ENCODE measurements at regions of chr1 and their contacts with region 1.

Region 1: GRCh38 chr1:201170533-201171062 is 16.3 kb upstream of the TMEM9 start:
- DNase-seq: peak; percentile 100
- ATAC-seq: peak; percentile 99
- H3K4me3 ChIP-seq: peak overlapping the region; percentile 70
- H3K27ac ChIP-seq: peak overlapping the region; percentile 27
- H3K4me1 ChIP-seq: peaks cover 18% of the 10 kb centered on the region
- H3K27me3 ChIP-seq: peaks cover 6% of the 10 kb centered on the region; the same call in 1 of the 2 replicates
- CTCF ChIP-seq: no peak

Region 2: DNA sequence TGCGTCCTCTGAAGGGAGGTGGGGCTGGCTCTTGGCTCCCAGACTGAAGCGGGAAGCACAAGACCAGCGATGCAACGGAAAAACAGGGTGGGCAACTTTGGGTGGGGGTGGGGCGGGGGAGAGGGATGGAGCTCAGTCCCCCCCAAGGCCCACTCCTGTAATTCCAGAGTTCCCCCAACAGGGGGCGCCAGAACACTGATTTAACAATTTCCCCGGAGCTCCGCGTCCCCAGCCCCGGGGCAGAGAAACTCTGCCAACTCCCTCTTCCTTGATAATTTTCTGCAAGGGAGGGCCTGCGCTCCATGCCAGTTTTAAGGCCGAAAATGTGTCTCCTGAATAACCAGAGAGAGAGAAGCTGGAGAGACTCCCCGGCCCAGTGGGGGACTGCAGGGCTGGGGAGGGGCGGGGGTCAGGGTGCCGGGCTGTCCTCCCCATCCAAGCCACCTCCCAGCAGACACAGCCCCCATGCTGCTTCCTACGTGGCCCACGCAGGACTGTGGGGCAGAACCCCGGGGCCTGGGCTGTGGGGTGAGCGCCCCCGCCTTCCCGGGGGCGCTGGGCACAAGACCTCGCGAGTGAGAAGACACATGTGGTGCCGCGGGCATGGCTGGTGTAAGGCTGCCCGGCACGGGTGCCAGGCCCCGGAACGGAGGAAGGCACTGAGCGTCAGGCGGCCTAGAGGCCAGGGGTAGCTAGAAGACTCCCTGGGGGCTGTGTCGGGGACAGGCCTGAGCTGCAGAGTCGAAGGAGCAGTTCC is 198.5 kb before region 1 on chr1:
- CTCF ChIA-PET with region 1: no interaction called
- POLR2A ChIA-PET with region 1: no interaction called
- intact Hi-C with region 1: no loop called
- DNase-seq: peak; percentile 93
- ATAC-seq: peak; percentile 10; the same call in 1 of the 2 replicates
- H3K4me3 ChIP-seq: peak overlapping the region; percentile 26; the same call in 1 of the 2 replicates
- H3K27ac ChIP-seq: no peak overlapping the region
- H3K4me1 ChIP-seq: peaks cover 15% of the 10 kb centered on the region
- H3K27me3 ChIP-seq: no peaks in the 10 kb centered on the region
- CTCF ChIP-seq: peak; percentile 98

Region 3: DNA sequence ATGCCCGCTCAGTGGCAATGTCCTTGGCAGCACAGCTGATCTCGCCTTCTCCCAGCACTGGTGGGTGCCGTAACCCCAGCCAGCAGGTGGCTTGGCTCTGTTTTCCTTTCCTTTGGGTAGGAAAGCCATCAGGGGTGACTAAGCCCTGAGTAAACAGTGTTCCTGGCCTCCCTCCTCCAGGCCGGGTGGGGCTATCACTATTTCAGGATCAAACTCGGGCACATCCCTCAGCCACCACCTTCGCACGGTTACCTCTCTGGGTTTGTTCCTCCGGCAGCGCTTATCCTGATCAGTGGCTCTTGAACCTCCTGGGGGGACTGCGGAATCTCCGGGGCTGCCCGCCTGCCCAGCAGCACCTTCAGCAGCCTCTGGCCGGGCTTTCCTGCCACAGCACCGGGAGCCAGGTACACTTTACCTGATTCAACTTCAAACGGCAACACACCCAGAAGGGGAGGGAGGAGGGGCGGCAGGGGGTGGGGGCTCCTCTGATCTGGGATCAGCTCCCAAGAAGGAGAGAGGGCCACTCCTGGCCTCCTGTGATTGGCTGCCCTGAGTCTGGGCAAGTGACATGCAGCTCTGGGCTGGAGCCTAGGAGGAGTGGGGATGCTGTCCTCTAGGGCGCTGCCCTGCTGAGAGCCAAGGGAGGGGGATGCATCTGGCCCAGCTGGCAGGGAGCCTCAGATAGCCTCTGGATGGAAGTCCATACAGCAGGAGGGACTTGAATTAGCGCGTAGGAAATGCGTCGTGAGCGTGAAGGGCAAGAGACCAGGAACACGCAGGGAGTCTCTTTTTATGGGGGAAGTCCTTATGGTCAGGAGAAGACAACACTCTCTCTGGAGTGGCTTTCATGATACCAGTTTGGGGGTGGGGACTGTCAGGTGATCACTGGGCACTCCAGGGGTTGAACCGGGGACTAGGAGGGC is 43.5 kb before region 1 on chr1 and contains the start of gene ASCL5:
- CTCF ChIA-PET with region 1: no interaction called
- POLR2A ChIA-PET with region 1: interaction called, 5 read pairs
- intact Hi-C with region 1: loop called (anchors 1 kb)
- DNase-seq: peak; percentile 100
- ATAC-seq: peak; percentile 90
- H3K4me3 ChIP-seq: peak within 1 kb of the TSS; percentile 59
- H3K27ac ChIP-seq: peak within 1 kb of the TSS; percentile 35
- H3K4me1 ChIP-seq: peaks cover 38% of the 10 kb centered on the region
- H3K27me3 ChIP-seq: no peaks in the 10 kb centered on the region
- CTCF ChIP-seq: peak; percentile 89
- total RNA-seq, gene ASCL5: 2.4 and 3.1 TPM in 2 replicates

Region 4: GRCh38 chr1:201149400-201149799 is 21.2 kb before region 1 on chr1:
- CTCF ChIA-PET with region 1: interaction called, 5 read pairs
- POLR2A ChIA-PET with region 1: interaction called, 5 read pairs
- intact Hi-C with region 1: loop called (anchors 1 kb)
- DNase-seq: peak; percentile 94
- ATAC-seq: peak; percentile 48
- H3K4me3 ChIP-seq: no peak overlapping the region
- H3K27ac ChIP-seq: no peak overlapping the region
- H3K4me1 ChIP-seq: peaks cover 15% of the 10 kb centered on the region
- H3K27me3 ChIP-seq: no peaks in the 10 kb centered on the region
- CTCF ChIP-seq: peak; percentile 99

Region 5: GRCh38 chr1:201154389-201155165 is 16.0 kb before region 1 on chr1 and contains the start of gene TMEM9:
- CTCF ChIA-PET with region 1: interaction called, 5 read pairs
- POLR2A ChIA-PET with region 1: interaction called, 5 read pairs
- intact Hi-C with region 1: loop called (anchors 1 kb)
- DNase-seq: peak; percentile 100
- ATAC-seq: peak; percentile 95
- H3K4me3 ChIP-seq: peak within 1 kb of the TSS; percentile 72
- H3K27ac ChIP-seq: peak within 1 kb of the TSS; percentile 1
- H3K4me1 ChIP-seq: peaks cover 20% of the 10 kb centered on the region
- H3K27me3 ChIP-seq: no peaks in the 10 kb centered on the region
- CTCF ChIP-seq: no peak
- total RNA-seq, gene TMEM9: 428 and 435 TPM in 2 replicates

Region 6: GRCh38 chr1:201184307-201185122 is 13.9 kb after region 1 on chr1:
- CTCF ChIA-PET with region 1: interaction called, 10 read pairs
- POLR2A ChIA-PET with region 1: no interaction called
- intact Hi-C with region 1: no loop called
- DNase-seq: peak; percentile 89
- ATAC-seq: peak; percentile 87
- H3K4me3 ChIP-seq: no peak overlapping the region
- H3K27ac ChIP-seq: no peak overlapping the region
- H3K4me1 ChIP-seq: peaks cover 11% of the 10 kb centered on the region; the same call in 1 of the 2 replicates
- H3K27me3 ChIP-seq: peaks cover 7% of the 10 kb centered on the region; the same call in 1 of the 2 replicates
- CTCF ChIP-seq: peak; percentile 93

Region 7: GRCh38 chr1:201223852-201224665 is 53.5 kb after region 1 on chr1:
- CTCF ChIA-PET with region 1: interaction called, 3 read pairs
- POLR2A ChIA-PET with region 1: no interaction called
- intact Hi-C with region 1: loop called (anchors 1 kb)
- DNase-seq: no peak
- ATAC-seq: no peak
- H3K4me3 ChIP-seq: no peak overlapping the region
- H3K27ac ChIP-seq: no peak overlapping the region
- H3K4me1 ChIP-seq: peaks cover 3% of the 10 kb centered on the region
- H3K27me3 ChIP-seq: no peaks in the 10 kb centered on the region
- CTCF ChIP-seq: no peak

Region 8: GRCh38 chr1:201229771-201230635 is 59.4 kb after region 1 on chr1:
- CTCF ChIA-PET with region 1: no interaction called
- POLR2A ChIA-PET with region 1: no interaction called
- intact Hi-C with region 1: loop called (anchors 2 kb)
- DNase-seq: peak; percentile 99
- ATAC-seq: peak; percentile 92
- H3K4me3 ChIP-seq: peak overlapping the region; percentile 3; the same call in 1 of the 2 replicates
- H3K27ac ChIP-seq: peak overlapping the region; percentile 54
- H3K4me1 ChIP-seq: peaks cover 21% of the 10 kb centered on the region
- H3K27me3 ChIP-seq: no peaks in the 10 kb centered on the region
- CTCF ChIP-seq: peak; percentile 91

Measured in PC-3 (cell line).